ENCODE measurements at regions of chr6 and their contacts with region 1.

Region 1: DNA sequence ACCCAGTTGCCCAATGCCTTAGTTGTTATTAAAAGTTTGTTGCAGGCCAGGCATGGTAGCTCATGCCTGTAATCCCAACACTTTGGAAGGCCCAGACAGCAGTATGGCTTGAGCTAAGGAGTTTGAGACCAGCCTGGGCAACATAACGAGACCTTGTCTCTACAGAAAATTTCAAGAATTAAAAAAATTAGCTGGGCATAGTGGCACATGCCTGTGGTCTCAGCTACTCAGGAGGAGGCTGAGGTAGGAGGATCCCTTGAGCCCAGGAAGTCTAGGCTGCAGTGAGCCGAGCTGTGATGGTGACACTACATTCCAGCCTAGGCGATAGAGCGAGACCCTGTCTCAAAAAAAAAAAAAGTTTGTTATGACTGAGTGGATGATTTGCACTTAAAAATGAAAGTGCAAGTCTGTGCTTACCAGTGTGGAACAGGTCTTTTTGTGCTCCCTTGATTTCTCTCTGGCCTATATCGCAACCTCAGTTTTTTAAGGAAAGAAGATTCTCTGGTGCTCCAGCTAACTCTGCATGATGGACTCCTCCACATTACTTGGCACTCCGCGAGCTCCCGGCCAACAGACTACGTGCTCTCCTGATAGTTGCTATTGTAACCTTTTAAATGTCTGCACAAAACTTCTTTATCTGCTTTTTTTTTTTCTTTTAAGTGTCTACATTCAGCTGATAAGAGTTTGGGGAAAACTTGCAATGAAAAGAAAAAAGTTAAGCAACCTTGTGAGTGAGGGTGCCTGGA is 22.1 kb downstream of the ZKSCAN3 start:
- DNase-seq: peak in 2 of 4 experiments; percentile 34 to 58
- ATAC-seq: peak; percentile 71
- H3K4me3 ChIP-seq: no peak overlapping the region
- H3K27ac ChIP-seq: no peak overlapping the region
- H3K4me1 ChIP-seq: peaks cover 3 to 14% of the 10 kb centered on the region in 2 experiments; a peak in 3 of 5 replicates
- H3K27me3 ChIP-seq: no peaks in the 10 kb centered on the region
- CTCF ChIP-seq: no peak
- EP300 ChIP-seq: no peak
- POLR2A ChIP-seq: no peak
- RAD21 ChIP-seq: no peak

Region 2: GRCh38 chr6:27503436-27504030 is 868.3 kb before region 1 on chr6:
- CTCF ChIA-PET with region 1: no interaction called
- POLR2A ChIA-PET with region 1: no interaction called
- in situ Hi-C with region 1: no loop called
- intact Hi-C with region 1: no loop called
- DNase-seq: peak; percentile 58 to 92 (median 72)
- ATAC-seq: peak; percentile 63
- H3K4me3 ChIP-seq: peak overlapping the region; percentile 55
- H3K27ac ChIP-seq: peak overlapping the region; percentile 87
- H3K4me1 ChIP-seq: peaks cover 8 to 29% of the 10 kb centered on the region in 2 experiments
- H3K27me3 ChIP-seq: no peaks in the 10 kb centered on the region
- CTCF ChIP-seq: 0 out of 6 replicates have a peak, but pooled peaks of 1 of the 3 experiments have one; percentile 1
- EP300 ChIP-seq: no peak; the same call in 1 of the 2 replicates
- POLR2A ChIP-seq: no peak
- RAD21 ChIP-seq: peak in 1 of 2 experiments; percentile 3; a peak in 1 of 4 replicates

Region 3: DNA sequence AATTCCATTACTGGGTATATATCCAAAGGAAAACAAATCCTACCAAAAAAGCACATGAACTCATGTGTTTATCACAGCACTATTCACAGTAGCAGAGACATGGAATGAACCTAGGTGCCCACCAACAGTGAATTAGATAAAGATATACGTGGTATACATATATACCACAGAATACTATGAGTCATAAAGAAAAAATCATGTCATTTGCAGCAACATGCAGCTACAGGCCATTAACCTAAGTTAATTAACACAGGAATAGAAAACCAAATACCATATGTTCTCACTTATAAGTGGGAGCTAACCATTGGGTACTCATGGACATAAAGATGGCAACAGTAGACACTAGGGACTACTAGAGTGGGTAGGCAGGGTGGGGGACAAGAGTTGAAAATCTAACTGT is 463.9 kb before region 1 on chr6:
- CTCF ChIA-PET with region 1: no interaction called
- POLR2A ChIA-PET with region 1: no interaction called
- in situ Hi-C with region 1: loop called (anchors 10 kb)
- intact Hi-C with region 1: no loop called
- DNase-seq: no peak
- ATAC-seq: no peak
- H3K4me3 ChIP-seq: no peak overlapping the region
- H3K27ac ChIP-seq: no peak overlapping the region
- H3K4me1 ChIP-seq: peaks cover 4 to 8% of the 10 kb centered on the region in 2 experiments; a peak in 4 of 5 replicates
- H3K27me3 ChIP-seq: no peaks in the 10 kb centered on the region
- CTCF ChIP-seq: no peak
- EP300 ChIP-seq: no peak
- POLR2A ChIP-seq: no peak
- RAD21 ChIP-seq: no peak

Region 4: GRCh38 chr6:28383235-28384142 is 11.6 kb after region 1 on chr6:
- CTCF ChIA-PET with region 1: no interaction called
- POLR2A ChIA-PET with region 1: interaction called, 12 read pairs
- in situ Hi-C with region 1: no loop called
- intact Hi-C with region 1: no loop called
- DNase-seq: peak; percentile 63 to 86 (median 71)
- ATAC-seq: peak; percentile 93
- H3K4me3 ChIP-seq: peak overlapping the region; percentile 31
- H3K27ac ChIP-seq: peak overlapping the region; percentile 61
- H3K4me1 ChIP-seq: peaks cover 4 to 6% of the 10 kb centered on the region in 2 experiments; a peak in 3 of 5 replicates
- H3K27me3 ChIP-seq: no peaks in the 10 kb centered on the region
- CTCF ChIP-seq: peak; percentile 59 to 71 (median 68)
- EP300 ChIP-seq: peak; percentile 49; the same call in 1 of the 2 replicates
- POLR2A ChIP-seq: peak; percentile 35; the same call in 1 of the 2 replicates
- RAD21 ChIP-seq: peak; percentile 42 to 55

Measured in K562 (cell line).